ENCODE measurements at regions of chr11 and their contacts with region 1.

Region 1: GRCh38 chr11:3037040-3037944 is 19.9 kb downstream of the CARS1 start:
- DNase-seq: peak; percentile 42 to 88
- H3K4me3 ChIP-seq: no peak overlapping the region
- H3K27ac ChIP-seq: no peak overlapping the region
- H3K4me1 ChIP-seq: no peaks in the 10 kb centered on the region
- H3K27me3 ChIP-seq: no peaks in the 10 kb centered on the region
- CTCF ChIP-seq: peak; percentile 60 to 86 (median 83)

Region 2: DNA sequence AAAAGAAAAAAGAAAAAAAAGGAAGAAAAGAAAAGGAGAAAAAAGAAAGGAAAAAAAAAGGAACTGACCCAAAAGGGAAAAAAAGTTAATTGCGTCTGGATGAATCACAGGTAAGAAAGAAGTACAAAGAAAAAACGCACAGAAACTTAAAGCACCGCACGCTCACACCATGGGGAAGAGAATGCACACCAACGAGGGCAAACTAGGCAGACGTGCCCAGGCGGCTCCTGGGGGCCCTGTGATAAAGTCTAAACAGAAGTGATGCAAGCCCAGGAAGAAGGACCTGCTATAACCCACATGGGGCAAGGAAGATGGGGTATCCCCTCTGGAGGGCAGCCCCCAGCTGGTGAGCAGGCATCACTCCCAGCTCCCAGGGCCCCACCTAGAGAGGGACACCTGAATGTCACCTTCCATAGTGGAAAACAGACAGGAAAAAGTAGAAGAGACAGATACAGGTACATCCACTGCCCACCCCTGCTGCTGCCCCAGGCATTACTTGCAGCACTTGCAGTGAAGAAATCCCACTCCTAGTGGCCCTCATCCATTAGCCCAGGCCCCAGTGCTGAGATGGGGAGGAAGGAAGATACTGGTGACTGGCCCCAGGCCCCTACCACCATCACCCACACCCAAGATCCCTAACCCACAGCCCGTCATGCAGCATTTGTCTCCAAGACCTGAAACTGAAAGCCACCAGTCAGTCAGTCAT is 74.0 kb before region 1 on chr11:
- intact Hi-C with region 1: loop called (anchors 2 kb)
- DNase-seq: no peak
- H3K4me3 ChIP-seq: no peak overlapping the region
- H3K27ac ChIP-seq: no peak overlapping the region
- H3K4me1 ChIP-seq: no peaks in the 10 kb centered on the region
- H3K27me3 ChIP-seq: no peaks in the 10 kb centered on the region
- CTCF ChIP-seq: no peak

Region 3: DNA sequence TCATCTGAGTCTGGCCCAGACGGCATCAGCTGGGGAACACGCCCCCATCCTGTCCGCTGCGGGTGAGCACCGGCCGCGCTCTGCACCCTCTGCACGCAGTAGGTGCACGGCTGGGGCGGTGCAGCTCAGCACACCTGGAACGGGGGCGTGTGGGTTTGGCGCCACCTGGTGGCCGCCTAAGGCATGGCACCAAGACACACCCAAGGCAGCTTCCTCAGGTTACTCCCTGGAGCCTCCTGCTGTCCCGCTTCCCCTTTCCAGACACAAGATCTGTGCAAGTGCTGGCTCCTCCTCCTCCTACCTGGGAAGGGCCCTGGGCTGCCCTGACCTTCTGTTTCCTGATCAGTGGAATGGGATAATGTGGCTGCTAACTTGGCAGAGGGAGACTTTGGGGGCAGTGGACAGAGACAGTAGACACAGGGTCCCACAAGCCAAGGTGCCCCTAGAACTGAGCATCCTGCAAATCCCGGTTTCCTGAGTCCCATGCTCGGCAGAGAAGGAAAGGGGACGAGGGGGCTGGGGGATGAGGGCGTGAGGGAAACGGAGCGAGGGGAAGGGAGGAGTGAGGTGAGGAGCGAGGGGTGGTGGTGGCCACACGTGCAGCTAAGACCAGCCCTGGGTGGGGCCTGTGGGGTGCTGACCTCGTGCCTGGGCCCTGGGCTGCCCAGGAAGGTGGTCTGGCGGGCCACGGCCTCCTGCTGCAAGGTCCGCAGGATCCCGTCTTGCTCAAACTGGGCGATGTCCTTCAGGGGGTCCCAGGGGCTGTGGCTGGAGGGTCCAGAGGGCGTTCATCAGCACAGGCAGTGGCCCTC is 54.7 kb after region 1 on chr11:
- intact Hi-C with region 1: loop called (anchors 1 kb)
- DNase-seq: no peak
- H3K4me3 ChIP-seq: no peak overlapping the region
- H3K27ac ChIP-seq: no peak overlapping the region
- H3K4me1 ChIP-seq: peaks cover 0 to 3% of the 10 kb centered on the region in 2 donors
- H3K27me3 ChIP-seq: no peaks in the 10 kb centered on the region
- CTCF ChIP-seq: peak; percentile 93 to 100 (median 99)